ENCODE measurements at regions of chr15 and their contacts with region 1.

Region 1: GRCh38 chr15:60928970-60929369 is 300.1 kb downstream of the RORA start:
- DNase-seq: no peak
- H3K4me3 ChIP-seq: no peak overlapping the region
- H3K27ac ChIP-seq: no peak overlapping the region
- H3K4me1 ChIP-seq: peaks cover 10% of the 10 kb centered on the region
- H3K27me3 ChIP-seq: no peaks in the 10 kb centered on the region
- CTCF ChIP-seq: no peak

Region 2: DNA sequence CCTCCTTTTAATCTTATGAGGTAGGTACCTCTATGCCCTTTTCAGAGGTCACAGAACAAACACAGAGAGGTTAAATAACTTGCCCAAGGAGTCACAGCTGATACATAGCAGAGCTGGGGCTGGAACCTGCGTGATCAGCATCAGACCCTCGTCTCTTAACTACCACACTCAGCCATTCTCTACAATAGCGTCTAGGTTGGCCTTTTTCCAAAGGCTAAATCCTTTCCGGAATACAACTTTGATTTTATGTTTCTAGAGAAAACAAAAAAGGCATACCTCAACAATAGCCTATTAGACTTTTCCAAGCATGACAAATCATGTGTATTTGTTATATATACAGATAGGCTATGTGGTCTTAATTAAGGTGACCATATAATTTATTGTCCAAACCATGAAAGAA is 112.9 kb after region 1 on chr15:
- intact Hi-C with region 1: loop called (anchors 5 kb)
- DNase-seq: no peak
- H3K4me3 ChIP-seq: no peak overlapping the region
- H3K27ac ChIP-seq: no peak overlapping the region
- H3K4me1 ChIP-seq: peaks cover 12% of the 10 kb centered on the region
- H3K27me3 ChIP-seq: no peaks in the 10 kb centered on the region
- CTCF ChIP-seq: no peak

Measured in left ventricle myocardium inferior (tissue), 1 donor.